ENCODE measurements at regions of chr15 and their contacts with region 1.

Region 1: DNA sequence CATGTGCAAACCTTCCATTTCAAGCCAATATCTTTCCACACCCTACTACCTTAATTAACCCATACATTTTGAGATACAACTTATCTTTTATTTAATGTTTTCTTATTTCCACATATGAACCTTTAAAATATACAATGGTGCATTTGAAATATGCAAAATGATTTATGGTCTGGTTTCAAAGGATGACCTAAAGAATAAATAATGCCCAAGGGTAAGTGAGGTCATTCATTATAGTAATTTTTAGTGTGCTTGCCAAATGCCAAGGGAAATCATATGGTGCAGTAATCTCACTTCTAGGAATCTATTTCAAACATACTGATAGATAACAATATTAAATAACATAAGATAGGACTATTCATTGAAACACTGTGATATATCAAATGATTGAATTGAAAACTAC is 1055.4 kb downstream of the AGBL1 start:
- DNase-seq: no peak
- H3K4me3 ChIP-seq: no peak overlapping the region
- H3K27ac ChIP-seq: no peak overlapping the region
- H3K4me1 ChIP-seq: no peaks in the 10 kb centered on the region
- H3K27me3 ChIP-seq: no peaks in the 10 kb centered on the region
- CTCF ChIP-seq: no peak

Region 2: GRCh38 chr15:87154767-87155166 is 19.7 kb after region 1 on chr15:
- CTCF ChIA-PET with region 1: no interaction called
- dilution Hi-C with region 1: no loop called
- in situ Hi-C with region 1: no loop called
- intact Hi-C with region 1: loop called (anchors 1 kb)
- DNase-seq: peak; percentile 95
- H3K4me3 ChIP-seq: no peak overlapping the region
- H3K27ac ChIP-seq: peak overlapping the region; percentile 86
- H3K4me1 ChIP-seq: peaks cover 9% of the 10 kb centered on the region
- H3K27me3 ChIP-seq: no peaks in the 10 kb centered on the region
- CTCF ChIP-seq: no peak